ENCODE measurements at regions of chr11 and their contacts with region 1.

Region 1: GRCh38 chr11:88552377-88553062 is 215.0 kb upstream of the CTSC start:
- DNase-seq: peak in 7 of 9 donors; percentile 7 to 54 (median 38)
- ATAC-seq: peak; percentile 78
- H3K4me3 ChIP-seq: no peak overlapping the region
- H3K4me3 Mint-ChIP-seq: no peak overlapping the region
- H3K27ac ChIP-seq: no peak overlapping the region
- H3K27ac Mint-ChIP-seq: peak overlapping the region in 1 of 9 donors; percentile 23
- H3K4me1 ChIP-seq: no peaks in the 10 kb centered on the region
- H3K4me1 Mint-ChIP-seq: peaks cover 0 to 8% (median 0%) of the 10 kb centered on the region in 7 donors
- H3K27me3 ChIP-seq: no peaks in the 10 kb centered on the region
- H3K27me3 Mint-ChIP-seq: peaks cover 0 to 7% (median 0%) of the 10 kb centered on the region in 5 donors

Region 2: GRCh38 chr11:87352759-87353707 is 1199.5 kb before region 1 on chr11:
- CTCF ChIA-PET with region 1: no interaction called
- POLR2A ChIA-PET with region 1: no interaction called
- intact Hi-C with region 1: loop called in 1 of 2 experiments (anchors 2 kb)
- DNase-seq: peak; percentile 58 to 87 (median 74)
- ATAC-seq: peak; percentile 93
- H3K4me3 ChIP-seq: no peak overlapping the region
- H3K4me3 Mint-ChIP-seq: peak overlapping the region in 3 of 10 donors; percentile 12 to 26 (median 21)
- H3K27ac ChIP-seq: no peak overlapping the region
- H3K27ac Mint-ChIP-seq: peak overlapping the region in 1 of 9 donors; percentile 52
- H3K4me1 ChIP-seq: peaks cover 0 to 6% of the 10 kb centered on the region in 2 donors
- H3K4me1 Mint-ChIP-seq: peaks cover 0 to 13% (median 10%) of the 10 kb centered on the region in 7 donors
- H3K27me3 ChIP-seq: peaks cover 0 to 5% of the 10 kb centered on the region in 2 donors
- H3K27me3 Mint-ChIP-seq: peaks cover 5 to 15% (median 9%) of the 10 kb centered on the region in 5 donors

Region 3: GRCh38 chr11:87878373-87878779 is 674.1 kb before region 1 on chr11:
- CTCF ChIA-PET with region 1: no interaction called
- POLR2A ChIA-PET with region 1: no interaction called
- intact Hi-C with region 1: loop called in 1 of 2 experiments (anchors 5 kb)
- DNase-seq: no peak
- ATAC-seq: no peak
- H3K4me3 ChIP-seq: no peak overlapping the region
- H3K4me3 Mint-ChIP-seq: no peak overlapping the region
- H3K27ac ChIP-seq: no peak overlapping the region
- H3K27ac Mint-ChIP-seq: no peak overlapping the region
- H3K4me1 ChIP-seq: no peaks in the 10 kb centered on the region
- H3K4me1 Mint-ChIP-seq: no peaks in the 10 kb centered on the region
- H3K27me3 ChIP-seq: no peaks in the 10 kb centered on the region
- H3K27me3 Mint-ChIP-seq: peaks cover 0 to 12% (median 8%) of the 10 kb centered on the region in 5 donors

Region 4: DNA sequence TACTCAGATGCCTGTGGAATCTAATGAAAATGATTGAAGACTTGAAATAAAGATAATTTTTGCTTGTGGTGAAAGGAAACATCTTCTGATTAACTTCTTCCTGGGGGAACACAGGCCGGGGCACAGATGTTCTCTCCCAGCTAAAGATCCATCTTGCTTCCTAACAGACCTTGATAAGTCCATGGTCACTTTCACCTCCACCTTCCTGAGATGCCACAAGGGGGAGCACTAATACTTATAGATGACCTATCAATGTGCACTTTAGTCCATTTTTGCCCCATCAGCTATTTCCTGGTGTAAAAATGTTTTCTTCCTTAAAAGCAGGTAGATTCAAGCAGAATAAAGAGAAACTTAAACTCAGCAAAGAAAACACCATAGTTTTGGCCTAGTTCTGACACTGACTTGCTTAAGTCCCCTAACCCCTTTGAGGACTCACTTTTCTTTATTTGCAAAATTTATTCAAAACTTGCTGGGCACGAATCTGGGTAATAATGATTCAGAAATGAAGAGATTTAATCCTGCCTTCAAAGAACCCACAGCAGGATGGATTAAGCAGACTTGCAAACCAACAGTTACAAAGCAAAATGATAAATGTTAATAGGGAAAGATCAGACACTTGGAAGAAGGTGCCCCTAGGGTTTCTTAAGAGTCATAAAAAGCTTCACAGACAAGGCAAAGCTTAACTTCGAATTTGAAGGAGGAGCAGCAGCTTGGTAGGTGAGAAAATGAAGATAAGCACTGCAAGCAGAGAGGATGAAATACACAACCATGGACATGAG is 535.9 kb before region 1 on chr11:
- CTCF ChIA-PET with region 1: interaction called, 19 read pairs
- POLR2A ChIA-PET with region 1: no interaction called
- intact Hi-C with region 1: loop called in 1 of 2 experiments (anchors 1 kb)
- DNase-seq: peak in 8 of 9 donors; percentile 26 to 61 (median 52)
- ATAC-seq: peak; percentile 71
- H3K4me3 ChIP-seq: no peak overlapping the region
- H3K4me3 Mint-ChIP-seq: no peak overlapping the region
- H3K27ac ChIP-seq: no peak overlapping the region
- H3K27ac Mint-ChIP-seq: no peak overlapping the region
- H3K4me1 ChIP-seq: no peaks in the 10 kb centered on the region
- H3K4me1 Mint-ChIP-seq: no peaks in the 10 kb centered on the region
- H3K27me3 ChIP-seq: no peaks in the 10 kb centered on the region
- H3K27me3 Mint-ChIP-seq: peaks cover 0 to 7% (median 2%) of the 10 kb centered on the region in 5 donors

Region 5: DNA sequence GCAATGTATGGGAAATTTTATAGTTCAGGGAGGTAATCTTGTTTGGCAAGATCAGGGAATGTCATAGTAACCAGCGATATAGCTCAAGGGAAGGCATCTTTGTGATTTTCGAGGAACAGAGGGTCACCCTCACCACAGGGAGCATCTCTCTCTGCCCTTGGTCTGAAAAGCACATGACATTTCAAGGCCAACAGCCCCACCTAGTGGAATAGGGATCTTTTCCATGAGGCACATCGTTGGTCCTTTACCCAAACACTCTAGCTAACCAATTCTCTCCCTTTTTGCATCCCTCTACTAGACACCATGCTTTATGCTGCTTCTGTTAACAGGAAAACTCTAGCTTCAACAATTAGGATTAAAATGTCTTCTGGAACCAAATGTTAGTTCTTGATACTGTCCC is 334.3 kb after region 1 on chr11:
- CTCF ChIA-PET with region 1: no interaction called
- POLR2A ChIA-PET with region 1: no interaction called
- intact Hi-C with region 1: loop called in 1 of 2 experiments (anchors 1 kb)
- DNase-seq: peak in 4 of 9 donors; percentile 11 to 34 (median 19)
- ATAC-seq: no peak
- H3K4me3 ChIP-seq: no peak overlapping the region
- H3K4me3 Mint-ChIP-seq: no peak overlapping the region
- H3K27ac ChIP-seq: no peak overlapping the region
- H3K27ac Mint-ChIP-seq: peak overlapping the region in 3 of 9 donors; percentile 9 to 19 (median 14)
- H3K4me1 ChIP-seq: no peaks in the 10 kb centered on the region
- H3K4me1 Mint-ChIP-seq: peaks cover 0 to 1% (median 0%) of the 10 kb centered on the region in 7 donors
- H3K27me3 ChIP-seq: no peaks in the 10 kb centered on the region
- H3K27me3 Mint-ChIP-seq: no peaks in the 10 kb centered on the region

Measured in naive thymus-derived CD4-positive, alpha-beta T cell (primary cell).